ENCODE measurements at regions of chr11 and their contacts with region 1.

Region 1: GRCh38 chr11:9716275-9717039 is 52.6 kb downstream of the SWAP70 start:
- DNase-seq: no peak
- ATAC-seq: peak; percentile 72
- H3K4me3 Mint-ChIP-seq: peak overlapping the region; percentile 71
- H3K27ac Mint-ChIP-seq: peak overlapping the region; percentile 87
- H3K4me1 Mint-ChIP-seq: peaks cover 92% of the 10 kb centered on the region
- H3K27me3 Mint-ChIP-seq: no peaks in the 10 kb centered on the region
- CTCF ChIP-seq: no peak

Region 2: DNA sequence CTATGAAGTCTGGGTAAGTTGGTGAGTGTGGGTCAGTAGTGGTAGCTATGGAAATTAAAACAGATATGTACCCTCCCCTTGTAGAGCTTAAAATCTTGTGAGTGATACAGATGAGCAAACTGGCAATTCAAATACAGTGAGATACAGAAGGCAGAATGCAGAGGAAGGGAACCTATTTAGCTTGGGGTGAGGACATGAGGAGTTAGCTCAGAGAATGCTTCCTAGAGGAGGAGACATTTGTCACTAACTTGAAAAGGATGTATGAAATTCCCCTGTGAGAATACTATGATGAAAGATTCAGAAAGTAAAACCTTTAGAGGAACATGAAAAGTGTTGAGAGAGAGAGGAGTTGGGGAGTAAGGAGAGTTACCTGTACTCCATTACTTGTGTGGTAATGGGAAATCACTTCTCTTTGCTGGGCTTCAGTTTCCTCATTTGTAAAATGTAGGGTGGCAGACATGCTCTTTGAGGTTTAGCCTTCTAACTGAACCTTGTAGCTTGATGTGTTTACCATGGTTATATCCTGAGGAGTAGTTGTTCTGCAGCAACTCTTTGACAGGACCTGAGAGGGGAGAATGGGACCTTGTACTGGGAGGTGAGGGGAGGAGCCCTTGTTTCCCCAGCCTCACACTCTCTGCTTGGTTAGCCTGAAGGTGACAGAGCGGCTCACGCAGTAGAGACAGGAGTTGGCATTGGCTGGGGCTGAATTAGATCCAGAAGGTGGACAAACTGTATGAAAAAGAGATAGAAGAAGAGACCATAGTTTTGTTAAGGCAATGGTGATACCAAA is 34.7 kb before region 1 on chr11:
- CTCF ChIA-PET with region 1: interaction called, 3 read pairs
- POLR2A ChIA-PET with region 1: interaction called, 11 read pairs
- intact Hi-C with region 1: no loop called
- DNase-seq: no peak
- ATAC-seq: peak; percentile 64
- H3K4me3 Mint-ChIP-seq: no peak overlapping the region
- H3K27ac Mint-ChIP-seq: no peak overlapping the region
- H3K4me1 Mint-ChIP-seq: peaks cover 60% of the 10 kb centered on the region
- H3K27me3 Mint-ChIP-seq: no peaks in the 10 kb centered on the region
- CTCF ChIP-seq: no peak

Region 3: GRCh38 chr11:9688716-9689511 is 27.5 kb before region 1 on chr11:
- CTCF ChIA-PET with region 1: interaction called, 3 read pairs
- POLR2A ChIA-PET with region 1: interaction called, 20 read pairs
- intact Hi-C with region 1: loop called (anchors 2 kb)
- DNase-seq: no peak
- ATAC-seq: peak; percentile 80
- H3K4me3 Mint-ChIP-seq: no peak overlapping the region
- H3K27ac Mint-ChIP-seq: no peak overlapping the region
- H3K4me1 Mint-ChIP-seq: peaks cover 52% of the 10 kb centered on the region
- H3K27me3 Mint-ChIP-seq: no peaks in the 10 kb centered on the region
- CTCF ChIP-seq: no peak

Region 4: GRCh38 chr11:9703280-9703679 is 13.2 kb before region 1 on chr11:
- CTCF ChIA-PET with region 1: no interaction called
- POLR2A ChIA-PET with region 1: interaction called, 7 read pairs
- intact Hi-C with region 1: loop called (anchors 2 kb)
- DNase-seq: no peak
- ATAC-seq: peak; percentile 30
- H3K4me3 Mint-ChIP-seq: peak overlapping the region; percentile 45
- H3K27ac Mint-ChIP-seq: peak overlapping the region; percentile 78
- H3K4me1 Mint-ChIP-seq: peaks cover 68% of the 10 kb centered on the region
- H3K27me3 Mint-ChIP-seq: no peaks in the 10 kb centered on the region
- CTCF ChIP-seq: no peak

Region 5: DNA sequence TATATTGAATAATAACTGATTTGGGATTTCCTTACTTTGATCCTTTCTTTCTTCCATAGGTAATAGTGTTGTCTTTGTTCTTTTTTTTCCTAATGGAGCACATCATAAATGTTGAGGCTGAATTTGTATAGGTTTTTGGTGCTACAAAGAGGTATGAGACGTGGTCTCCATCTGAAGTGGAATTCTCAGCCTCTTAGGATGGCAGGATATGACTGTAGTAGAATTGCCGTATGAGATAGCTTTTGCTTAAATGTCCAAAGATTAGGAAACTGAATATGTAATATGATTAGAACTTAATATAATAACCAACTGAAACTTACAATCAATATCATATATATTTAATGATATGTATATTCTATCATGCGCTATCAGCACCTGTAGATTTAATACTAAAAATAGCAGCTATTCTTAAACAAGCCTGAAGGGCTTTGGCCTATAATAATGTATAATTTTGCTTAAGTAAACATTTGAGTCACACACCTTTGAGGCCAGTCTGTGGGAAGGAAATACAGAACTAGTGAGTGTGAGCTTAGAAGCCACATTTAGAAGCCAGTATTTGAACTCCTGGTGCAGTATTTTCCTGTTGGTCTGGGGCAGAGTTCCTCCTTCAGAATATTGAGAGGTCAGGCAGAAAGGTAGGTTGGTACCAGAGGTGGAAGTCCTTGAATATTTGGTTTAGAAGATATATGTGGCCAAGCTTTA is 10.0 kb after region 1 on chr11:
- CTCF ChIA-PET with region 1: interaction called, 3 read pairs
- POLR2A ChIA-PET with region 1: interaction called, 76 read pairs
- intact Hi-C with region 1: loop called (anchors 1 kb)
- DNase-seq: no peak
- ATAC-seq: peak; percentile 35
- H3K4me3 Mint-ChIP-seq: peak overlapping the region; percentile 47
- H3K27ac Mint-ChIP-seq: peak overlapping the region; percentile 84
- H3K4me1 Mint-ChIP-seq: peaks cover 82% of the 10 kb centered on the region
- H3K27me3 Mint-ChIP-seq: no peaks in the 10 kb centered on the region
- CTCF ChIP-seq: no peak

Region 6: DNA sequence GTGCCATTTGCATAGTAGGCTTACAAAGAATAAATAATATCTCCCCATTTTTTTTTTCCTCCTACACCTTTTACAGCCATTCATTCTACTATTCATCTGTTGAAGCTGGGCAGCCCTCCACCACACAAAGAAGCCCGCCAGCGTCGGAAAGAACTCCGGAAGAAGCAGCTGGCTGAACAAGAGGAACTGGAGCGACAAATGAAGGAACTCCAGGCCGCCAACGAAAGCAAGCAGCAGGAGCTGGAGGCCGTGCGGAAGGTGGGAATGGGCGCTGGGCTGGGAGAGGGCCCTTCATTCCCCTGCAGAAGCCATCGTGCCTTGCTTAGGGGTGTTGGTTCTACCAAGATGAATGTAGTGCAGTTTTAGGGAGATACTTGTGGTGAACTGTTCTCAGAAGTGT is 16.0 kb after region 1 on chr11:
- CTCF ChIA-PET with region 1: interaction called, 5 read pairs
- POLR2A ChIA-PET with region 1: interaction called, 76 read pairs
- intact Hi-C with region 1: loop called (anchors 1 kb)
- DNase-seq: no peak
- ATAC-seq: no peak
- H3K4me3 Mint-ChIP-seq: no peak overlapping the region
- H3K27ac Mint-ChIP-seq: peak overlapping the region; percentile 81
- H3K4me1 Mint-ChIP-seq: peaks cover 87% of the 10 kb centered on the region
- H3K27me3 Mint-ChIP-seq: no peaks in the 10 kb centered on the region
- CTCF ChIP-seq: no peak

Region 7: DNA sequence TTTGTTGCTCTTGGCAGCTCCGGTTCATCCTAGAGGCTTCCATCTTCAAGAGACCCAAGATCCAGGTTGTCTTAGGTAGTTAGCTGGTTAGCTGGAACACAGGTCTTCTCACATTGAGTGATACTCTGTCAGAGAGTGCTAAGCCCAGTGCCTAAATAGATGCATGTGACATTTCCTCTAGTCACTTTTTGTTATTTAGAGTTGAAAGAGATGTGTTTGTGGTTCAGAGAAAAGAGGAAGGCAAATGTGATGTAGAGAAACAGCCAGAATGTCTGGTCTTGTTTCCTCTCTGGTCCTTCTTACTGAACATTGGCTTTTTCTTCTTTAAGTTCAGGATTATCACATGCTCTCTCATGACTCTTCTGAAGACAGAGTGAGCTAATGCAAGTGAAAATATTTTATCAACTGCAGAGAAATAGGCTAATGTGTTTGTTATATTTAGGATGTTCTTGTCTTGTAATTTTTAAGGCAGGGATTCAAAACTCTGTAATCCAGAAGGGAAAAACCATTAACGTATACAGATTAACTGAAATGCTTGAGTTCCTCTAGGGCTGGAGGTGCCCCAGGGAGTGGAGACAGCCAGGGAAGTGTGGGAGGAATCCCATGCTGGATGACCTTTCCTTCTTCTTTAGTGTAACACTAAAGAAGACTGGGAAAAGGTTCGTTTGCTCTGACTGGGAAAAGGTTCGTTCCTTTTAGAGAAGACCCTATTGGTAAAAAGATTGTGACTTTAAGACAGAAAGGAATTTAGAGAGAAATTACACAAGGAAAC is 22.9 kb after region 1 on chr11:
- CTCF ChIA-PET with region 1: interaction called, 4 read pairs
- POLR2A ChIA-PET with region 1: interaction called, 35 read pairs
- intact Hi-C with region 1: loop called (anchors 2 kb)
- DNase-seq: no peak
- ATAC-seq: peak; percentile 83
- H3K4me3 Mint-ChIP-seq: peak overlapping the region; percentile 77
- H3K27ac Mint-ChIP-seq: peak overlapping the region; percentile 97
- H3K4me1 Mint-ChIP-seq: peaks cover 75% of the 10 kb centered on the region
- H3K27me3 Mint-ChIP-seq: no peaks in the 10 kb centered on the region
- CTCF ChIP-seq: no peak